ENCODE measurements at regions of chr20 and their contacts with region 1.

Region 1: DNA sequence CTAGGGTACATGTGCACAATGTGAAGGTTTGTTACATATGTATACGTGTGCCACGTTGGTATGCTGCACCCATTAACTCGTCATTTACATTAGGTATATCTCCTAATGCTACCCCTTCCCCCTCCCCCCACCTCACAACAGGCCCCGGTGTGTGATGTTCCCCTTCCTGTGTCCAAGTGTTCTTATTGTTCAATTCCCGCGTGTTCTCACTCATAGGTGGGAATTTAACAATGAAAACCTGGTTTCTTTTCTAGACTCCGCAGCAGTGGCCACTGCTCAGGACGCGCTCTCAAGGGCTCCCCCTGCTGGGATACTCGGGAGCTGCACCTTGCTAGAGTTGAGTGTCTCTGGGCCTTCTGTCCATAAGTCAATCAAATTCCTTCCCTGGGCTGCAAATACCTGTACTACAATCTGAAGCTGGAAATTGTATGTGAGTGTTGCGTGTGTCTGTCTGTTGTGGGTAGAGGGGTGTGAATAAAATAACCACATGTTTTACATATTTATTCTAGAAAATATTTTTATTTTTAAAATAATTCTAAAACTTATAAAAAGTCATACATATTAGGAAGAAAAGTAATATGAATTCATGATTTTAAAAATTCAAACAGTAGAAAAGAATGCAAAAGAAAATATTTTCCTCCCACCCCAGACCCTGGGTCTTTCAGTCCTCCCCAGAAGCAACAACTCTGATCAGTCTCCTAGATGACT is 8.2 kb upstream of the CEP250 start:
- DNase-seq: peak; percentile 68
- ATAC-seq: peak; percentile 95
- H3K4me3 ChIP-seq: peak overlapping the region; percentile 23 to 29; a peak in 3 of 4 replicates
- H3K27ac ChIP-seq: no peak overlapping the region
- H3K4me1 ChIP-seq: peaks cover 3 to 21% of the 10 kb centered on the region in 2 experiments; a peak in 3 of 4 replicates
- H3K27me3 ChIP-seq: no peaks in the 10 kb centered on the region
- CTCF ChIP-seq: peak; percentile 72 to 98 (median 90); a peak in 5 of 6 replicates
- POLR2A ChIP-seq: no peak
- RAD21 ChIP-seq: peak; percentile 63

Region 2: GRCh38 chr20:35434067-35435005 is 12.9 kb before region 1 on chr20:
- CTCF ChIA-PET with region 1: interaction called, 15 read pairs
- POLR2A ChIA-PET with region 1: no interaction called
- RAD21 ChIA-PET with region 1: interaction called in 1 of 2 experiments, 6 read pairs
- intact Hi-C with region 1: no loop called
- DNase-seq: no peak
- ATAC-seq: no peak
- H3K4me3 ChIP-seq: no peak overlapping the region
- H3K27ac ChIP-seq: no peak overlapping the region
- H3K4me1 ChIP-seq: peaks cover 0 to 10% of the 10 kb centered on the region in 2 experiments; a peak in 3 of 4 replicates
- H3K27me3 ChIP-seq: no peaks in the 10 kb centered on the region
- CTCF ChIP-seq: no peak
- POLR2A ChIP-seq: no peak
- RAD21 ChIP-seq: no peak

Measured in HCT116 (cell line).